Caco-2 (cell line): ENCODE measurements at regions of chr1 and their contacts with region 1.

Region 1: DNA sequence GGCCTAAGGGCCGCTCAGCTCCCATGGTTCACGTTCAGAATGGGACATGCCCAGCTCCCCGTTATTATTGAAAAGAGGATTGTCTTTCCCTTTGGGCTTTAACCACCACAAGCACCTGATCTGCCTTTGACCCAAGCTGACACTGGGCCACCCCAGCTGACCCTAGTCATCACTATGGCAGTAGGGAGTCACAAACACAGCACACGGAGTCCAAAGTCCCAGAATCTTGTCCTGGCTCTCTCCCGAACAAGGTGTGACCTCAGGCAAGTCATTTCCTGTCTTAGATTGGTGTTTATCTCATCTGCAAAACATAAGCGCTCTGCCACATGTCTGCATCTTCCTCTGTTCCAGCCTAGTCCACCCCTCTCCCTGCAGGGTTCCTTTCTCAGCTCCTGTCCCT is 31.5 kb downstream of the IGFN1 start:
- DNase-seq: no peak
- H3K4me3 ChIP-seq: no peak overlapping the region
- H3K4me3 Mint-ChIP-seq: no peak overlapping the region
- H3K27ac Mint-ChIP-seq: no peak overlapping the region
- H3K4me1 ChIP-seq: peaks cover 4% of the 10 kb centered on the region
- H3K4me1 Mint-ChIP-seq: peaks cover 7% of the 10 kb centered on the region
- H3K27me3 ChIP-seq: no peaks in the 10 kb centered on the region
- H3K27me3 Mint-ChIP-seq: no peaks in the 10 kb centered on the region
- CTCF ChIP-seq: no peak

Region 2: DNA sequence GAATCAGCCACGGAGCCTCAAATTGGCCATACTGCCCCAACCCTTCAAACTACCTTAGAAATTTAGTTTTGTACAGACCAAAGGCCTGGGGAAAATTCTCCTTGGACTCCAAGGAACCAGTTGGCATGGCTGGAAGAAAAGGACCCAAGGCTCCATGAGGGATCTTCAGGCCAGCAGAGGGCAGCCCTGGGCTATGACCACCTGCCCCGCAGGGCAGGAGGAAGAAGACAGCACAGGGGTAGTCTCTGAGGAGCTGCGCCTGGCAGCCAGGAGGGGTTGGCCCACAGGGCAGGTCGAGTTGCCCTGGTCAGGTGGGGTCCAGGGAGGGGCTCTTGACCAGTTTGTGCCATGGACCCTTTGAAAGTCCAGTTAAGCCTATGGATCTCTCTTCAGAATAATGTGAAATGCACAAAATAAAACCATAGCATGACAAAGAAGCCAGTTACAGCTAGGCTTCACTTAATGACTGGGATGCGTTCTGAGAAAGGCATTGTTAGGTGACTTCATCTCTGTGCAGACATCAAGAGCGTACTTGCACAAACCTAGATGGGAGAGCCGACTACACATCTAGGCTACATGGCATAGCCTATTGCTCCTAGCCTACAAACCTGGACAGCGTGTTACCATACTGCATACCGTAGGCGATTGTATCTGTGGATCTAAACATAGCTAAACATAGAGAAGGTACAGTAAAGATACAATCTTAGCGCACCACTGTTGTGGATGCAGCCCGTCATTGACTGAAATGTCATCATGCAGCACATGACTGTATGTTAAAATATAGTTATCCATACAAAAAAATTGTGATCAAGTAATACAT is 136.0 kb before region 1 on chr1:
- CTCF ChIA-PET with region 1: interaction called, 5 read pairs
- POLR2A ChIA-PET with region 1: no interaction called
- intact Hi-C with region 1: loop called (anchors 2 kb)
- DNase-seq: peak; percentile 65 to 76
- H3K4me3 ChIP-seq: no peak overlapping the region
- H3K4me3 Mint-ChIP-seq: no peak overlapping the region
- H3K27ac Mint-ChIP-seq: no peak overlapping the region
- H3K4me1 ChIP-seq: no peaks in the 10 kb centered on the region
- H3K4me1 Mint-ChIP-seq: peaks cover 11% of the 10 kb centered on the region
- H3K27me3 ChIP-seq: no peaks in the 10 kb centered on the region
- H3K27me3 Mint-ChIP-seq: no peaks in the 10 kb centered on the region
- CTCF ChIP-seq: peak; percentile 76 to 86

Region 3: GRCh38 chr1:201149400-201149799 is 72.7 kb before region 1 on chr1:
- CTCF ChIA-PET with region 1: interaction called, 12 read pairs
- POLR2A ChIA-PET with region 1: no interaction called
- intact Hi-C with region 1: loop called (anchors 1 kb)
- DNase-seq: peak in 1 of 2 experiments; percentile 55
- H3K4me3 ChIP-seq: no peak overlapping the region
- H3K4me3 Mint-ChIP-seq: no peak overlapping the region
- H3K27ac Mint-ChIP-seq: no peak overlapping the region
- H3K4me1 ChIP-seq: peaks cover 6% of the 10 kb centered on the region; the same call in 1 of the 2 replicates
- H3K4me1 Mint-ChIP-seq: no peaks in the 10 kb centered on the region
- H3K27me3 ChIP-seq: no peaks in the 10 kb centered on the region
- H3K27me3 Mint-ChIP-seq: no peaks in the 10 kb centered on the region
- CTCF ChIP-seq: peak; percentile 54 to 69

Region 4: DNA sequence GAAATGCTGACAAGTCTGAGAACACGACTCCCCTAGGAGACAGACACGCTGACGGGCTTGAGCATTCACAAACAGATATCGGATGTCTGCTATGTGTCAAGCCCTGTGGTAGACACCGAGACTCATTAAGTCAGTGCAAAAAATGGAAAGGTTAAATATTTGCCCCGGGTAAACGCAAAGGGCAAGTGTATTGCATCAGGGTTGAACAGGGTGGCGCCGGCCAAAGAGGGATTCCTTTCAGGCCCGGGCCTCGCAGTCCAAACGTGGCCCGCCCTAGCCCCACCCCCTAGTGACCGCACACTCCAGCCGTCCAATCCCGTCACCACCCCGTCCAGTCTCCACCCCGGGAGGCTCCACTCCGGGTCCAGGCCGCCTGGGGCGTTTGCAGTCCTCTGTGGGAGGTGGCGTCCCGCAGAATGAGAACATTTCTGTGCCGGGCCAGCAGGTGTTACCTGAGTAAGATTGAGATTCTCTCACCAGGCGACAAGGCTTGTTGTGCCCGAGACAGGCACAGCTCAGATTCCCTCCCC is 51.5 kb before region 1 on chr1:
- CTCF ChIA-PET with region 1: interaction called, 4 read pairs
- POLR2A ChIA-PET with region 1: no interaction called
- intact Hi-C with region 1: loop called (anchors 2 kb)
- DNase-seq: peak; percentile 99
- H3K4me3 ChIP-seq: peak overlapping the region; percentile 33
- H3K4me3 Mint-ChIP-seq: peak overlapping the region; percentile 84
- H3K27ac Mint-ChIP-seq: peak overlapping the region; percentile 91
- H3K4me1 ChIP-seq: peaks cover 44% of the 10 kb centered on the region
- H3K4me1 Mint-ChIP-seq: peaks cover 42% of the 10 kb centered on the region
- H3K27me3 ChIP-seq: no peaks in the 10 kb centered on the region
- H3K27me3 Mint-ChIP-seq: no peaks in the 10 kb centered on the region
- CTCF ChIP-seq: no peak

Region 5: DNA sequence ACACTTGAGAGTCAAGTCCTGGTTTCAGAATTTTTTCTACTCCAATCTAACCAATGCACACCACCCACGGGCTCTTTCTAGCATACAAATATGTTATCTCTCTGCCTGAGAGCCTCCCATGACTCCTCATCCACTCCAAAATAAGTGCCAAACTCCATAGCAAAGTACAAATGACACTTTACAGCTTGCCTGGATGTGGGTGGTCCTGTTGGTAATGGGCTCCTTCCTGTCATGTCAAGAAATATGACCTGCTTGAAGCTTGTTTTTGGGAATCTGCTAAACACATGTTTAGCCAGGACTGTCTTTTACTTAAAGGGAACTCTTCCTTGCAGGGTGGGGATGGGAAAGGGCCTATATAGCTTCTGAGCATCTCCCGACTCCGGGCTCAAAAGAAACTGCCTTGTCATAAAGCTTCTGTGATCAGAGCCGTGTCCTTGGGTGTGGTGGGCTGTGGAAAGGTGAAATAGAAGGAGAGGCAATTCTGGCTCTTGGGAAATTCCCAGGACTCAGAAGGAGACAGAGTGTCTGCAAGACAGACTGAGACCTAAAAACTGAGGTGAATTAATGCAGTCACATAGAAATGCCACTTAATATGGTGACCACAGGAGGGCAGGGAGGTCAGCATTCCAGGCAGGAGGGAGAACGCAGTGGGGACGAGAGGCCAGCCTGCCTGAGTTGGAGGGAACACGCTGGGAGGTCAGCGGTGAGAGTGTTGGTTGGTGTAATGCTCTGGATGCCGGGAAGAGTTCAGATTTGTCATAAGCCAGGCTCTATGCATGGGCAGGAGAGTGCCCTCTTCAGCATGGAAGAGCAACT is 37.6 kb before region 1 on chr1:
- CTCF ChIA-PET with region 1: interaction called, 3 read pairs
- POLR2A ChIA-PET with region 1: no interaction called
- intact Hi-C with region 1: loop called (anchors 2 kb)
- DNase-seq: peak; percentile 68 to 70
- H3K4me3 ChIP-seq: no peak overlapping the region
- H3K4me3 Mint-ChIP-seq: no peak overlapping the region
- H3K27ac Mint-ChIP-seq: no peak overlapping the region
- H3K4me1 ChIP-seq: no peaks in the 10 kb centered on the region
- H3K4me1 Mint-ChIP-seq: peaks cover 8% of the 10 kb centered on the region
- H3K27me3 ChIP-seq: no peaks in the 10 kb centered on the region; the same call in 1 of the 2 replicates
- H3K27me3 Mint-ChIP-seq: peaks cover 3% of the 10 kb centered on the region
- CTCF ChIP-seq: peak; percentile 69 to 86

Region 6: GRCh38 chr1:201275041-201275676 is 53.0 kb after region 1 on chr1:
- CTCF ChIA-PET with region 1: no interaction called
- POLR2A ChIA-PET with region 1: no interaction called
- intact Hi-C with region 1: no loop called
- DNase-seq: no peak
- H3K4me3 ChIP-seq: no peak overlapping the region
- H3K4me3 Mint-ChIP-seq: no peak overlapping the region
- H3K27ac Mint-ChIP-seq: no peak overlapping the region
- H3K4me1 ChIP-seq: no peaks in the 10 kb centered on the region
- H3K4me1 Mint-ChIP-seq: no peaks in the 10 kb centered on the region
- H3K27me3 ChIP-seq: no peaks in the 10 kb centered on the region; the same call in none of the 2 replicates
- H3K27me3 Mint-ChIP-seq: peaks cover 2% of the 10 kb centered on the region
- CTCF ChIP-seq: no peak

Region 7: DNA sequence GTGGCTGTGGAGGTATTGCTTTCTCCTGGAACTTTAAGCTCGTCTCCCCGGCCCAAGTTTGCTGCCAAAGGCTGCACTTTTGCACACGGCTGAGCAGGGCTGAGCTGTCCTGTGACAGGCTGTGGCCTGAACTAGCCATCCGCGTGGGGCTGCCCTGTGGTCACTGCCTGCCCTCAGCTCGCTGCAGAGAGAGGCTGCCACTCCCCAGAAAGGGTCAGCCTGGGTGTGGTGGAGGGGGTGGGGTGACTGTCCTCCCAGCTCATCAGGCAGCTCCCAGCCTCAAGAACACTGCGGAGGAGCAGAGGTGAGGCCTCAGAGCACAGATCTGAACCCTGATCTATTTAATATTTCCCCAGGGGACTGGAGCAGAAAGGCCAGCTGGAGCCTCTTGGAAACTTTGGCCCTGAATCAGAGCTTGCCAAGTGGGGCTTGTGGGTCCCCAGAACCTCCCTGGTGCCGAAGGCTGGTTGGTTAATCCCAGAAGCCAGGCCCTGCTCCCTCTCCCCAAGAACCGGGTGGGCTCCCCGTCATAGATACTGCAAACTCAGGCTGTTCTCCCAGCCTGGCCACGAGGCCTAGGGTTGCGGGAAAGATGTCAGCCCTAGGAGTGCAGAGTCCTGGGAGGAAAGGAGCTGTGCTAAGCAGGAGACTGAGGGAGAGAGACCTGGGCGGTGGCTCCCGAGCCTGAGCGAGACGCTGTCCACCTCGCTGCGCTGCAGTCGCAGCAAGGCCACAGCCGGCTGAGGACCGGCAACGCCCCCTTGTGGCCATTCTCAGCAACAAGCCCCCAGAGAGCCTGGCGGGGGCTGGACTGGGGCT is 481.7 kb after region 1 on chr1:
- CTCF ChIA-PET with region 1: no interaction called
- POLR2A ChIA-PET with region 1: no interaction called
- intact Hi-C with region 1: no loop called
- DNase-seq: peak; percentile 77 to 87
- H3K4me3 ChIP-seq: no peak overlapping the region
- H3K4me3 Mint-ChIP-seq: no peak overlapping the region
- H3K27ac Mint-ChIP-seq: no peak overlapping the region
- H3K4me1 ChIP-seq: no peaks in the 10 kb centered on the region
- H3K4me1 Mint-ChIP-seq: no peaks in the 10 kb centered on the region
- H3K27me3 ChIP-seq: no peaks in the 10 kb centered on the region
- H3K27me3 Mint-ChIP-seq: peaks cover 3% of the 10 kb centered on the region
- CTCF ChIP-seq: peak; percentile 93